CD8-positive, alpha-beta T cell (primary cell): ENCODE measurements at regions of chr21 and their contacts with region 1.

Region 1: GRCh38 chr21:25561668-25562641 is 45.3 kb downstream of the MRPL39 start:
- DNase-seq: peak in 8 of 9 experiments; percentile 45 to 84 (median 66)
- ATAC-seq: peak; percentile 77
- H3K4me3 ChIP-seq: peak overlapping the region; percentile 67 to 80
- H3K4me3 Mint-ChIP-seq: peak overlapping the region; percentile 95
- H3K27ac ChIP-seq: peak overlapping the region; percentile 17 to 69
- H3K27ac Mint-ChIP-seq: peak overlapping the region; percentile 93
- H3K4me1 ChIP-seq: peaks cover 22% of the 10 kb centered on the region
- H3K4me1 Mint-ChIP-seq: peaks cover 52% of the 10 kb centered on the region
- H3K27me3 ChIP-seq: no peaks in the 10 kb centered on the region
- H3K27me3 Mint-ChIP-seq: no peaks in the 10 kb centered on the region
- CTCF ChIP-seq: no peak

Region 2: DNA sequence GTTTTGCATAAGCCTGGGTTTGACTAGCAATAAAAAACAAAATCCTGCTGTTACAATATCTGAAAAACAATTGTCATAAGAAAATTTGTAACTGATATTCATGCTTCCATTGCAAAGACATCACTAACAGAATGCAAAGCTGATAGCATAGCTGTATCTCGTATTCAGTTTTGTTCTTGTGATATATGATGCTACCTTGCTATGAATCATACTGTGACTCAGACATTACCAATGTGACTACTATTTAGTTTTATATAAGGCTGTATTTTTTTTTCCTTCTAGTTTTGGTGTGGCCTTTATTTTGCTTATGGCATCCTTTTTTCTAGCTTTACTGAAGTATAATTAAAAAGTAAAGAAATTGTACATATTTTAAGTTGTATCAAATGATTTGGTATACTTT is 1336.5 kb before region 1 on chr21:
- CTCF ChIA-PET with region 1: no interaction called
- POLR2A ChIA-PET with region 1: no interaction called
- intact Hi-C with region 1: no loop called
- DNase-seq: no peak
- ATAC-seq: no peak
- H3K4me3 ChIP-seq: no peak overlapping the region
- H3K4me3 Mint-ChIP-seq: no peak overlapping the region
- H3K27ac ChIP-seq: no peak overlapping the region
- H3K27ac Mint-ChIP-seq: no peak overlapping the region
- H3K4me1 ChIP-seq: no peaks in the 10 kb centered on the region
- H3K4me1 Mint-ChIP-seq: no peaks in the 10 kb centered on the region
- H3K27me3 ChIP-seq: no peaks in the 10 kb centered on the region
- H3K27me3 Mint-ChIP-seq: no peaks in the 10 kb centered on the region
- CTCF ChIP-seq: no peak

Region 3: GRCh38 chr21:25457411-25457810 is 104.5 kb before region 1 on chr21:
- CTCF ChIA-PET with region 1: no interaction called
- POLR2A ChIA-PET with region 1: no interaction called
- intact Hi-C with region 1: loop called (anchors 2 to 5 kb)
- DNase-seq: peak in 2 of 9 experiments; percentile 77 to 87
- ATAC-seq: peak; percentile 90
- H3K4me3 ChIP-seq: peak overlapping the region in 1 of 2 experiments; percentile 30
- H3K4me3 Mint-ChIP-seq: peak overlapping the region; percentile 75
- H3K27ac ChIP-seq: peak overlapping the region in 1 of 2 experiments; percentile 74
- H3K27ac Mint-ChIP-seq: peak overlapping the region; percentile 83
- H3K4me1 ChIP-seq: peaks cover 12% of the 10 kb centered on the region
- H3K4me1 Mint-ChIP-seq: peaks cover 16% of the 10 kb centered on the region
- H3K27me3 ChIP-seq: no peaks in the 10 kb centered on the region
- H3K27me3 Mint-ChIP-seq: no peaks in the 10 kb centered on the region
- CTCF ChIP-seq: no peak

Region 4: DNA sequence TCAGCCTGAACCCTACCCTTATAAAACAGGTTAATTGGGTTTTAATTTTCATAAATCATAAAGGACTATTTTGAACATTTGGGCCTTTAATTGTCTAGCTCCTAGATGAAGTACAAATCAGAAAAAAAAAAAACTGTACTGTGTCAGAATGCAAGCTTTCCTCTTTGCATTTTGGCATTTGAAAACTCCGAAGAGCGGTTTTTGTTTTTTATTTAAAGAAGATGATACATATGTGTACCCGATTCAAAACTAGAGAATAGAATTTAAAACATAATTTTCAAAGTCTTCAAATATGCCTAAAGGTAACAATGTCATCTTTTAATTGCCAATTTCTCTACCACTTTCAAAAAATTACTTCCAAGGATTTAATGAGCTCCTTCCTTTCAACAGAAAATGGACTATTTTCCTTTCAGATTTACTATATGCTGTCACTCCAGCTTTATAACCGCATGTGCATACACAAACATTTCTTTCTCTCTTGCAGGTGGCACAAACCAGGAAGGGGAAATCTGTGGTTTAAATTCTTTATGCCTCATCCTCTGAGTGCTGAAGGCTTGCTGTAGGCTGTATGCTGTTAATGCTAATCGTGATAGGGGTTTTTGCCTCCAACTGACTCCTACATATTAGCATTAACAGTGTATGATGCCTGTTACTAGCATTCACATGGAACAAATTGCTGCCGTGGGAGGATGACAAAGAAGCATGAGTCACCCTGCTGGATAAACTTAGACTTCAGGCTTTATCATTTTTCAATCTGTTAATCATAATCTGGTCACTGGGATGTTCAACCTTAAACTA is 11.7 kb after region 1 on chr21:
- CTCF ChIA-PET with region 1: interaction called, 3 read pairs
- POLR2A ChIA-PET with region 1: interaction called, 3 read pairs
- intact Hi-C with region 1: loop called in 1 of 2 experiments (anchors 1 kb)
- DNase-seq: peak in 6 of 9 experiments; percentile 9 to 81 (median 34)
- ATAC-seq: peak; percentile 79
- H3K4me3 ChIP-seq: peak overlapping the region; percentile 6 to 9
- H3K4me3 Mint-ChIP-seq: peak overlapping the region; percentile 79
- H3K27ac ChIP-seq: peak overlapping the region; percentile 34 to 72
- H3K27ac Mint-ChIP-seq: peak overlapping the region; percentile 94
- H3K4me1 ChIP-seq: peaks cover 22% of the 10 kb centered on the region
- H3K4me1 Mint-ChIP-seq: peaks cover 49% of the 10 kb centered on the region
- H3K27me3 ChIP-seq: no peaks in the 10 kb centered on the region
- H3K27me3 Mint-ChIP-seq: no peaks in the 10 kb centered on the region
- CTCF ChIP-seq: no peak